CD8-positive, alpha-beta T cell (primary cell): ENCODE measurements at regions of chr6 and their contacts with region 1.

Region 1: GRCh38 chr6:90478789-90479602 is 107.9 kb downstream of the MAP3K7 start:
- DNase-seq: peak; percentile 51 to 91 (median 81)
- ATAC-seq: peak; percentile 99
- H3K4me3 ChIP-seq: no peak overlapping the region
- H3K4me3 Mint-ChIP-seq: no peak overlapping the region
- H3K27ac ChIP-seq: no peak overlapping the region
- H3K27ac Mint-ChIP-seq: peak overlapping the region; percentile 10
- H3K4me1 ChIP-seq: peaks cover 11% of the 10 kb centered on the region
- H3K4me1 Mint-ChIP-seq: peaks cover 19% of the 10 kb centered on the region
- H3K27me3 ChIP-seq: no peaks in the 10 kb centered on the region
- H3K27me3 Mint-ChIP-seq: no peaks in the 10 kb centered on the region
- CTCF ChIP-seq: peak; percentile 88

Region 2: GRCh38 chr6:89432875-89433251 is 1046.1 kb before region 1 on chr6 and contains the start of gene ANKRD6:
- CTCF ChIA-PET with region 1: no interaction called
- POLR2A ChIA-PET with region 1: no interaction called
- intact Hi-C with region 1: loop called (anchors 1 to 5 kb)
- DNase-seq: peak; percentile 69 to 92 (median 82)
- ATAC-seq: peak; percentile 96
- H3K4me3 ChIP-seq: peak within 1 kb of the TSS; percentile 42 to 66
- H3K4me3 Mint-ChIP-seq: peak within 1 kb of the TSS; percentile 89
- H3K27ac ChIP-seq: peak within 1 kb of the TSS in 1 of 2 experiments; percentile 28
- H3K27ac Mint-ChIP-seq: peak within 1 kb of the TSS; percentile 82
- H3K4me1 ChIP-seq: peaks cover 7% of the 10 kb centered on the region
- H3K4me1 Mint-ChIP-seq: peaks cover 25% of the 10 kb centered on the region
- H3K27me3 ChIP-seq: no peaks in the 10 kb centered on the region
- H3K27me3 Mint-ChIP-seq: no peaks in the 10 kb centered on the region
- CTCF ChIP-seq: peak; percentile 78
- total RNA-seq, gene ANKRD6: 4.3 to 5.9 TPM

Region 3: DNA sequence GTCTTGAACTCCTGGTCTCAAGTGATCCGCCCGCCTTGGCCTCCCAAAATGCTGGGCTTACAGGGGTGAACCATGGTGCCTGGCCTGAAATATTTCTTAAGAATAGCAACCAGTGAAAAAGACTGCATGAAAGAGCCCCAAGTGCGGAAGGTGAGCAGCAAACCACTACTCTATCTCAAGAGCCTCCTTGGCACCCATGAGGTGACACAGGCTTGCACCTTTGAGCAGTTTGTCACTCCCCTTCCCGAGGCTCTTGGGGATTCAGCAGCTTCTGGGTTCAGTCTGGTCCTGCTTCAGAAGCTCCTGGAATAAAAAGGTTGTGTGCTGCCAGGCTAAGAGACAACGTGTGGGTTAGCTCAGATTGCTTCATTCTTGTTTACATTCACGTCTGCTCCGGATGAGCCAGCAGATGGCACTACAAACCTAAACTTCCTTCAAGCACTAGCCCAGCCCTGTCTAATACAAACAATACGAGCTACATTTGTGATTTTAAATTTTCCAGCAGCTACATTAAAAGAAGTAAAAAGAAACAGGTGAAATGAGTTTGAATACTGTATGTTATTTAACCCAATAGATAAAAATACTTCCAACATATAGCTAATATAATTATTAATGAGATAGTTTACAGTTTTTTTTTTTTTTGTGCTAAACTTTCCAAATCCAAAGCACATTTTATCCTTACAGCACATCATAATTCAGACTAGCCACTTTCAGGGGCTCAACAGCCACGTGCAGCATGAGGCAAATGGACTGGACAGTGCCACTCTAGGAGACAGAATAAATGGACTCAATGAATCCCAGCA is 538.6 kb before region 1 on chr6:
- CTCF ChIA-PET with region 1: interaction called, 152 read pairs
- POLR2A ChIA-PET with region 1: interaction called, 10 read pairs
- intact Hi-C with region 1: loop called (anchors 1 kb)
- DNase-seq: peak; percentile 38 to 87 (median 69)
- ATAC-seq: peak; percentile 95
- H3K4me3 ChIP-seq: no peak overlapping the region
- H3K4me3 Mint-ChIP-seq: no peak overlapping the region
- H3K27ac ChIP-seq: no peak overlapping the region
- H3K27ac Mint-ChIP-seq: peak overlapping the region; percentile 81
- H3K4me1 ChIP-seq: peaks cover 16% of the 10 kb centered on the region
- H3K4me1 Mint-ChIP-seq: peaks cover 40% of the 10 kb centered on the region
- H3K27me3 ChIP-seq: no peaks in the 10 kb centered on the region
- H3K27me3 Mint-ChIP-seq: no peaks in the 10 kb centered on the region
- CTCF ChIP-seq: peak; percentile 80

Region 4: GRCh38 chr6:90080876-90081481 is 398.0 kb before region 1 on chr6:
- CTCF ChIA-PET with region 1: no interaction called
- POLR2A ChIA-PET with region 1: no interaction called
- intact Hi-C with region 1: loop called in 1 of 2 experiments (anchors 10 kb)
- DNase-seq: peak; percentile 40 to 89 (median 68)
- ATAC-seq: peak; percentile 80
- H3K4me3 ChIP-seq: peak overlapping the region; percentile 54 to 66
- H3K4me3 Mint-ChIP-seq: peak overlapping the region; percentile 98
- H3K27ac ChIP-seq: peak overlapping the region; percentile 66 to 77
- H3K27ac Mint-ChIP-seq: peak overlapping the region; percentile 99
- H3K4me1 ChIP-seq: peaks cover 75% of the 10 kb centered on the region
- H3K4me1 Mint-ChIP-seq: peaks cover 89% of the 10 kb centered on the region
- H3K27me3 ChIP-seq: no peaks in the 10 kb centered on the region
- H3K27me3 Mint-ChIP-seq: no peaks in the 10 kb centered on the region
- CTCF ChIP-seq: no peak

Region 5: DNA sequence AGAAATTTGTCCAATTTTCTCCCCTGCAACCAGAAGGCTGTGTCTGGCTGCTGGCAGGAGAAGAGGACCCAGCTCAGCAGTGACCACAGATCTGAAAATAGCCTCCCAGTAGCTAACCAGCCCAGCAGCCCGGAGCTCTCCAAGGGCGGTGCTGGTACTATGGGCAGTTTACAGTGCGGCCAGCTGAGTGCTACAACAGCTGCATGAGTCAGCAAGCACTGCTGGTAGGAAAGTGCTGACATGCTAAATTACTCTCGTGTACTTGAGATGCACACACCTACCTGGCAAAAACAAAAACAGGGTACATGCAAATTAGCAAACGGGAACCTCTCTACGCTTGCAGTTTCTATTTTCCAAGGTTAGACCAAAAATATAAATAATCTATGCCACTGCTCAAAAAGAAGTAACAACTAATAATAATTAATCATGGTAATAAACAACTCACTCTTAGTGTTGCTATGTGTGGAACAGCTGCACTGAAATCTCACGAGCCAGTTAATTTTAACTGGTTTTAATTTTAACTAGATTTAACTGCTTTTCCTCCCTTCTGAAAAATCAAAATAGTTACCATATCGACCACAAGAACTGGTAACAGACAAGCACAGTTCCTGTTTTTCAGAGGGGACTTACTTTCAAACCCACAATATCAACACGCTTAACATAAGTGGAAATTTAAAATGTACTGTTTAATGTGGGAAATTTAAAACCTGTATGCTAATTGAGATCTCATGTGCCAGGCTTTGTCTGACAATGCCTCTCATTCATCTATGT is 193.2 kb before region 1 on chr6:
- CTCF ChIA-PET with region 1: interaction called, 24 read pairs
- POLR2A ChIA-PET with region 1: no interaction called
- intact Hi-C with region 1: loop called (anchors 1 kb)
- DNase-seq: peak in 5 of 9 experiments; percentile 46 to 77 (median 64)
- ATAC-seq: peak; percentile 46
- H3K4me3 ChIP-seq: peak overlapping the region; percentile 30 to 62
- H3K4me3 Mint-ChIP-seq: peak overlapping the region; percentile 83
- H3K27ac ChIP-seq: peak overlapping the region; percentile 1 to 74
- H3K27ac Mint-ChIP-seq: peak overlapping the region; percentile 93
- H3K4me1 ChIP-seq: peaks cover 93% of the 10 kb centered on the region
- H3K4me1 Mint-ChIP-seq: peaks cover 90% of the 10 kb centered on the region
- H3K27me3 ChIP-seq: no peaks in the 10 kb centered on the region
- H3K27me3 Mint-ChIP-seq: no peaks in the 10 kb centered on the region
- CTCF ChIP-seq: no peak

Region 6: GRCh38 chr6:90955246-90955645 is 476.2 kb after region 1 on chr6:
- CTCF ChIA-PET with region 1: no interaction called
- POLR2A ChIA-PET with region 1: no interaction called
- intact Hi-C with region 1: no loop called
- DNase-seq: no peak
- ATAC-seq: no peak
- H3K4me3 ChIP-seq: no peak overlapping the region
- H3K4me3 Mint-ChIP-seq: no peak overlapping the region
- H3K27ac ChIP-seq: no peak overlapping the region
- H3K27ac Mint-ChIP-seq: no peak overlapping the region
- H3K4me1 ChIP-seq: no peaks in the 10 kb centered on the region
- H3K4me1 Mint-ChIP-seq: no peaks in the 10 kb centered on the region
- H3K27me3 ChIP-seq: no peaks in the 10 kb centered on the region
- H3K27me3 Mint-ChIP-seq: no peaks in the 10 kb centered on the region
- CTCF ChIP-seq: no peak